Aorta (tissue), 5 donors: ENCODE measurements at regions of chr13 and their contacts with region 1.

Region 1: DNA sequence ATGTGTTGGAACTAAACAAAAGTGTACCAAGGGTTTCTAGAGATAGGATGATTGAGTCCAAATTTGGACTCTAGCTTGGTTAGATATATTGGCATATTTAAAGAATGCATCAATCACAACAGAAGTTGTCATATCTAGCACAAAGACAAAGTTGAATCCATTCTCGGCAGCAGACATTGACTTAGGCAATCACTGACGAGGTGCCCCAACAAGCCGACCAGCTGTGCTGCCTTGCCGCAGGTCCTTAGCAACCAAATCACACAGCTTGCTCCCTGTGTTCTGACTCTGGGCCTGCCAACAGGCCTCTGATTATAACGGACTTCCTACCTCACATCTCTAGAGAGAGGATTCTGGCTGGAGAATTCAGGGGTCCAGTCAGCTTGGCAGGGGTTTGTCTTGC is 208.7 kb downstream of the MTUS2 start:
- DNase-seq: no peak
- ATAC-seq: no peak
- H3K4me3 ChIP-seq: no peak overlapping the region
- H3K27ac ChIP-seq: no peak overlapping the region
- H3K4me1 ChIP-seq: peaks cover 0 to 8% of the 10 kb centered on the region in 2 donors
- H3K27me3 ChIP-seq: no peaks in the 10 kb centered on the region

Region 2: DNA sequence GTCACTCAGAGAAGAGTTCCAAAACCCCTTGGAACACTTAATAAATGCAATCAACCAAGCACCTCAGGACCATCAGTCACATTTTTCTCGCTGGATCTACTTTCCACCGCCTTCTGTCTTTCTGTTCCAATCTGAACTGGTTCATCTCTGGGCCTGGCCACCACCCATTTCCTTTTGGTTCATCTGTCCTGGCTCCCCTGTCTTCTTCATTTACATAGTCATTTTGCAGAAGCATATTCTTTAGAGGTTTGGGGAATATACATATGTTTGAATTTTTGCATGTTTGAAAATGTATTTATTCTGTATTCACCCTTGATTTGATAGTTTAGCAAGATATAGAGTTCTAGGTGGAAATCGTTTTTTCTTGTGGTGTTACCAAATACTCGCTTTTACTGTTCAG is 20.6 kb before region 1 on chr13:
- intact Hi-C with region 1: loop called in 1 of 2 experiments (anchors 2 kb)
- DNase-seq: no peak
- ATAC-seq: no peak
- H3K4me3 ChIP-seq: no peak overlapping the region
- H3K27ac ChIP-seq: no peak overlapping the region
- H3K4me1 ChIP-seq: peaks cover 9 to 21% of the 10 kb centered on the region in 2 donors
- H3K27me3 ChIP-seq: no peaks in the 10 kb centered on the region